ENCODE measurements at regions of chr1 and their contacts with region 1.

Region 1: DNA sequence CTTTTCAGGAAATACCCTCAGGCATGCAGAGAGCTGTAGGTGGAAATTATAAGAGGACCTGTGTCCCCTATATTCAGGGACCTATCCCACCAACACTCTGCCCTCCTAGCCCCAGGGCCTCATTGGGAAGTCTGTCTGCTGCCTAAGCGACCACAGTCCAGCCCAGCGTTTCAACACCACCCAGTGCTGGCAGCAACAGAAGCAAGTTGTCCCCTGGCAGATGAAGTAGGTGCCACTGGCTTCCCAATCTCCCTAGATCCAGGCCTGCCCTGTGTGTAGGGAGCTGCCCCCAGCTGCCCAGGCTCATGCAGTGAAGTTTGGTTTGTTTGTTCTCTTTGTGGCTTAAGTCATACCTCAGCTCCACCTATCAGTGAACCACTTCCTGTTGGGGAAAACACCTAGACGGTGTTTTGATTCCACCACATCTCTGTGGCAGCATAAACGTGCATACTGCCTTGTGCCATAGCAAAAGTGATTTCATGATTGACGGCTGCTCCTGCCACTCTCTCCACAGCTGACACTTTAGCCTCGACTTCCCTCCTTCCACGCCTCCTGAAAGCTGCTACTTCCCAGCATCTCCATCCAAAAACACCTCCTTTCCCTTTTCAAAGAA is 8.1 kb upstream of the LEFTY1 start:
- DNase-seq: peak; percentile 78
- H3K4me3 Mint-ChIP-seq: no peak overlapping the region
- H3K27ac Mint-ChIP-seq: peak overlapping the region; percentile 78
- H3K4me1 Mint-ChIP-seq: peaks cover 17% of the 10 kb centered on the region
- H3K27me3 Mint-ChIP-seq: no peaks in the 10 kb centered on the region
- CTCF ChIP-seq: no peak

Region 2: DNA sequence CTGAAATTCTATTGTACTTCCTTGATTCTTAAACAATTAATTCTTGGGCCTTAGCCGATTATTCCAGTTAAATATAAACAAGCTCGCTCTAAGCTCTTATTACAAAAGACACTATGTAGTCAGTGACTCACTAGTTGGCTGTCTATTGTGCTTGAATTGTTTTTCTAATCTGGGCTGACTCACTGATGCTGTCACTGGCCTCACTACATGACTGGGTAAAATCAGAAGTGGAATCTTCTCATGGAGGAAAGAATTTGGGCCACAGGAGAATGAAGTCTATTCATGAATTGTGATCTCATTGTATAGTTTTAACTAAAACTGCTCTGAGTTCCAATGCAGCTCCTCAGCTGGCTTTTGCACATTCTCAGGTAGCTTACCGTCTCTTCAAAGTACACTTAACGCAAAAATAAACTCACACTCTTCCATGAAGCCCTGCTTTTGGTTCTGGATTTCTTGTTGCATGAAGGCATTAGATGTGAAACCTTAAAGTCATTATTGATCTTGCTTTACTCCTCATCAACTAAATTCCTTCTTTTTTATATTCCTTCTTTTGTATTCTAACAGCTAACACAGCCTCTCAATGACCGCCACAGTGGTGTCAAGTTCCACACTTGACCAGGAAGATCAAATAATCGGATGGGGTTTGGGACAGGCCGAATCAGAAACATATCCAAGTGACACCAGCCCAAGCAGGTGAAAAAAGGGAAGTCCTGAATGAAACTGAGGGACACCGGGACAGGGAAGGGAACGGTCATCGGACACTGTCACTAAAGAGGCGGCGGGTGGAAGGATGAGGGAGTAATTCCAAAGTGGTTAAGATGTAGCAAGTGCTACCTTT is 388.3 kb before region 1 on chr1:
- CTCF ChIA-PET with region 1: no interaction called
- POLR2A ChIA-PET with region 1: no interaction called
- intact Hi-C with region 1: no loop called
- DNase-seq: peak; percentile 99
- H3K4me3 Mint-ChIP-seq: no peak overlapping the region
- H3K27ac Mint-ChIP-seq: peak overlapping the region; percentile 83
- H3K4me1 Mint-ChIP-seq: peaks cover 32% of the 10 kb centered on the region
- H3K27me3 Mint-ChIP-seq: no peaks in the 10 kb centered on the region
- CTCF ChIP-seq: no peak

Region 3: GRCh38 chr1:225806249-225806648 is 90.8 kb before region 1 on chr1:
- CTCF ChIA-PET with region 1: no interaction called
- POLR2A ChIA-PET with region 1: no interaction called
- intact Hi-C with region 1: no loop called
- DNase-seq: no peak
- H3K4me3 Mint-ChIP-seq: no peak overlapping the region
- H3K27ac Mint-ChIP-seq: no peak overlapping the region
- H3K4me1 Mint-ChIP-seq: peaks cover 10% of the 10 kb centered on the region
- H3K27me3 Mint-ChIP-seq: no peaks in the 10 kb centered on the region
- CTCF ChIP-seq: no peak

Region 4: DNA sequence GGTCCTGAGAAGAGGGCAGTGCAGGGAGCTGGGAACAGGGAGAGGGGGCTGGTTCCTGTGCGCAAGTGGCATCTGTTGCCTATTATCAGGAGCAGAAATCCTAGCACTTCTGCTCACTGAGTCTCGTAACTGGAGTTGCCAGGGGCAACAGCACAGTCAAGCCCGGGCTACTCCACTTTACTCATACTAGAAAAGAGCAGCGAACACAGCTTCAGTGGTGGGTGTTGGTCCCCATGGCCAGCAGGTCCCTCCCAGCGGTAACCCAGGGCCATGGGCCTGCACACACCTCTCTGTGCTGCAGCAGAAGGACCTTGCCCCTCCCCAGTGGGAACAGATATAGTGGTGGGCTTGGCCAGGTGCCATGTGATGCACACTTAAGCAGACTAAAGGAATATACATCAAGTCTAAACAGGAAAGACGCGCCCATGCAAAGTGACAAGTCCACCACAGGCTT is 18.5 kb after region 1 on chr1:
- CTCF ChIA-PET with region 1: interaction called, 3 read pairs
- POLR2A ChIA-PET with region 1: interaction called, 10 read pairs
- intact Hi-C with region 1: no loop called
- DNase-seq: no peak
- H3K4me3 Mint-ChIP-seq: no peak overlapping the region
- H3K27ac Mint-ChIP-seq: no peak overlapping the region
- H3K4me1 Mint-ChIP-seq: peaks cover 24% of the 10 kb centered on the region
- H3K27me3 Mint-ChIP-seq: no peaks in the 10 kb centered on the region
- CTCF ChIP-seq: no peak

Region 5: DNA sequence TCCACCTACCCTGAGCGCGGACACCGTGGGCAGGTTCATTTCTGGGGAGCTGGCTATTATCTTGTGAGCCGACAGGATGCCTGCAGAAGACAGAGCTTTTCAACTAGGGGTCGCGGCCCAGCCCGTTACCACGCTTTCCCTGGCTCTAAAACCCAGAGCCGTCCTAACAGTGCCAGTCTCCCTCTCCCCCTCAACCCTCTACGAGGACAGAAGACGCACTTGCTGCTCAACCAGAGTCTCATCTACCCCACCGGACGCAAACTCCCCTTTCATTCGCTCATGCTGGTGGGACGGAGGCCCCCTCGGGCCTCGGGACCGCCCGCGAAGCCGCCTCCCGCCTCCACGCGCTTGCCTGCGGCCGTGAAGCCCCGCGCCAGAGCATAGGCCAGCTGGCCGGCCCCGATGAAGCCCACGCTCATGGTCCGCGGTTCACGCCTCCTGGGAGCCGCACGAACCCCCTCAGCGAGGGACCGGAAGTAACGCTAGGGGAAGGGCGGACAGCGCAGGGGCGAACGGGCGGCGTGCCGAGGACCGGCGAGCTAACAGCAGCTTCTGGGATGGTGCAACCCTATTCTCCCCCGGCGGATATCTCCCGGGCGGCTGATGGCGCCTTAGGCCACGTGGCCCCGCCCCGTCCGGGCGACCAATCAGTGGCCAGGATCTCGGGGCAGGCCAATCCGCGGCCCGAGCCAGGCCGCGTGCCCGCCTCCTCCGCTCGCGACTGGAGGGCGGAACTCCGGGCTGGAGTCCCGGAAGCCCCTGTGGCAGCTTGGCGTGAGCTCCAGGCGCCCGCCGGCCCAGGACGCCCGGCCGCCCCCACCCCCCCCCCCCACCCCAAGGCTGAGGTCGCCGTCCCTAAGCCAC is 26.9 kb after region 1 on chr1 and contains the start of gene PYCR2:
- CTCF ChIA-PET with region 1: interaction called, 4 read pairs
- POLR2A ChIA-PET with region 1: interaction called, 19 read pairs
- intact Hi-C with region 1: no loop called
- DNase-seq: peak; percentile 99
- H3K4me3 Mint-ChIP-seq: peak within 1 kb of the TSS; percentile 99
- H3K27ac Mint-ChIP-seq: peak within 1 kb of the TSS; percentile 95
- H3K4me1 Mint-ChIP-seq: peaks cover 42% of the 10 kb centered on the region
- H3K27me3 Mint-ChIP-seq: no peaks in the 10 kb centered on the region
- CTCF ChIP-seq: no peak
- total RNA-seq, gene PYCR2: 172 and 173 TPM in 2 replicates